Ovary (tissue), 10 donors: ENCODE measurements at regions of chr6 and their contacts with region 1.

Region 1: GRCh38 chr6:106444777-106445507 is 84.4 kb downstream of the CRYBG1 start:
- DNase-seq: no peak
- H3K4me3 ChIP-seq: no peak overlapping the region
- H3K27ac ChIP-seq: no peak overlapping the region
- H3K4me1 ChIP-seq: no peaks in the 10 kb centered on the region
- H3K27me3 ChIP-seq: no peaks in the 10 kb centered on the region
- CTCF ChIP-seq: peak; percentile 28 to 37 (median 29)
- EP300 ChIP-seq: no peak
- POLR2A ChIP-seq: no peak

Region 2: GRCh38 chr6:106381871-106382270 is 63.1 kb before region 1 on chr6:
- intact Hi-C with region 1: no loop called
- DNase-seq: no peak
- H3K4me3 ChIP-seq: no peak overlapping the region
- H3K27ac ChIP-seq: no peak overlapping the region
- H3K4me1 ChIP-seq: no peaks in the 10 kb centered on the region
- H3K27me3 ChIP-seq: no peaks in the 10 kb centered on the region
- CTCF ChIP-seq: no peak
- EP300 ChIP-seq: no peak
- POLR2A ChIP-seq: no peak

Region 3: GRCh38 chr6:106568530-106568929 is 123.6 kb after region 1 on chr6:
- intact Hi-C with region 1: loop called (anchors 5 kb)
- DNase-seq: no peak
- H3K4me3 ChIP-seq: no peak overlapping the region
- H3K27ac ChIP-seq: no peak overlapping the region
- H3K4me1 ChIP-seq: no peaks in the 10 kb centered on the region
- H3K27me3 ChIP-seq: no peaks in the 10 kb centered on the region
- CTCF ChIP-seq: no peak
- EP300 ChIP-seq: no peak
- POLR2A ChIP-seq: no peak